Naive thymus-derived CD4-positive, alpha-beta T cell (primary cell): ENCODE measurements at regions of chr12 and their contacts with region 1.

Region 1: DNA sequence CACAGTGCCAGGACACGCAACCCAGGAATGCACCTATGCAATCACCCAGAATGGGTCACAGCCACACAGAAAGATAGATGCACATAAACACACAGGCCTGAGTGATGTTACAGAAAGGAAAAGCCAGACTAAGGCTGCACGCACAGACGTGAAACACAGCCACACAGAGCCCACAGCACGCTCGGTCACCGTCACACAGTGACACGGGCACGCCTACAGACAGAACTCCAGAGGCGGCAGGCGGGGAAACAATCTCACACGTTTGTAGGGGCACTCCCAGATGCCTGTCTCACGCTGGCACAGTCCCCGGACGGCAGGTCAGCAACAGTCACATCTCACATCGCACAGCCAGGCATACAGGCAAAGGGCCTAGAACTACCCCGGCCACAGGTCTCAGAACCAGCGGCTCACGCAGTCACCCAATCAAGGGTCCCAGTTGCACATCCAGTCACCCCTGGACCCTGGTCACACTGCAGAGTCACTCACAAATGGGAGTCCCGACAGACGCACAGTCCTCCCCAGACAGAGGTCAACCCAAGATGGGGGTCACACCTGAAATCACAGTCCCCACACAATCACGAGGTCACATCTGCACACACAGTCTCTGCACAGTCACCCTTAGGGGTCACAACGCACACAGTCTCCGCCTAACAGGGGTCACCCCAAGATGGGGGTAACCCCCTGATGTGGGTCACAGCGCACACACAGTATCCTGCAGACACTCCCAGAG is 790 bp downstream of the SSH1 start:
- DNase-seq: peak; percentile 35 to 77 (median 54)
- ATAC-seq: peak; percentile 68
- H3K4me3 ChIP-seq: peak overlapping the region; percentile 84
- H3K4me3 Mint-ChIP-seq: peak overlapping the region; percentile 89 to 97 (median 94)
- H3K27ac ChIP-seq: peak overlapping the region; percentile 62
- H3K27ac Mint-ChIP-seq: peak overlapping the region; percentile 76 to 99 (median 92)
- H3K4me1 ChIP-seq: peaks cover 18 to 23% of the 10 kb centered on the region in 2 donors
- H3K4me1 Mint-ChIP-seq: peaks cover 26 to 56% (median 47%) of the 10 kb centered on the region in 7 donors
- H3K27me3 ChIP-seq: no peaks in the 10 kb centered on the region
- H3K27me3 Mint-ChIP-seq: peaks cover 0 to 2% (median 0%) of the 10 kb centered on the region in 5 donors

Region 2: GRCh38 chr12:108803428-108804105 is 53.0 kb before region 1 on chr12:
- CTCF ChIA-PET with region 1: no interaction called
- POLR2A ChIA-PET with region 1: no interaction called
- intact Hi-C with region 1: loop called in 1 of 2 experiments (anchors 2 kb)
- DNase-seq: peak; percentile 25 to 78 (median 70)
- ATAC-seq: peak; percentile 93
- H3K4me3 ChIP-seq: no peak overlapping the region
- H3K4me3 Mint-ChIP-seq: no peak overlapping the region
- H3K27ac ChIP-seq: no peak overlapping the region
- H3K27ac Mint-ChIP-seq: peak overlapping the region in 3 of 9 donors; percentile 37 to 62 (median 48)
- H3K4me1 ChIP-seq: peaks cover 0 to 3% of the 10 kb centered on the region in 2 donors
- H3K4me1 Mint-ChIP-seq: peaks cover 0 to 10% (median 3%) of the 10 kb centered on the region in 7 donors
- H3K27me3 ChIP-seq: no peaks in the 10 kb centered on the region
- H3K27me3 Mint-ChIP-seq: no peaks in the 10 kb centered on the region

Region 3: GRCh38 chr12:108884116-108885012 is 27.8 kb after region 1 on chr12:
- CTCF ChIA-PET with region 1: no interaction called
- POLR2A ChIA-PET with region 1: no interaction called
- intact Hi-C with region 1: loop called in 1 of 2 experiments (anchors 1 kb)
- DNase-seq: peak; percentile 15 to 55 (median 33)
- ATAC-seq: peak; percentile 93
- H3K4me3 ChIP-seq: no peak overlapping the region
- H3K4me3 Mint-ChIP-seq: no peak overlapping the region
- H3K27ac ChIP-seq: no peak overlapping the region
- H3K27ac Mint-ChIP-seq: no peak overlapping the region
- H3K4me1 ChIP-seq: no peaks in the 10 kb centered on the region
- H3K4me1 Mint-ChIP-seq: peaks cover 0 to 6% (median 0%) of the 10 kb centered on the region in 7 donors
- H3K27me3 ChIP-seq: no peaks in the 10 kb centered on the region
- H3K27me3 Mint-ChIP-seq: no peaks in the 10 kb centered on the region

Region 4: GRCh38 chr12:109154451-109155438 is 298.2 kb after region 1 on chr12:
- CTCF ChIA-PET with region 1: no interaction called
- POLR2A ChIA-PET with region 1: interaction called, 3 read pairs
- intact Hi-C with region 1: loop called in 1 of 2 experiments (anchors 2 kb)
- DNase-seq: peak; percentile 58 to 87 (median 76)
- ATAC-seq: peak; percentile 99
- H3K4me3 ChIP-seq: peak overlapping the region; percentile 73
- H3K4me3 Mint-ChIP-seq: peak overlapping the region; percentile 85 to 98 (median 95)
- H3K27ac ChIP-seq: peak overlapping the region; percentile 61
- H3K27ac Mint-ChIP-seq: peak overlapping the region; percentile 71 to 95 (median 87)
- H3K4me1 ChIP-seq: peaks cover 5 to 10% of the 10 kb centered on the region in 2 donors
- H3K4me1 Mint-ChIP-seq: peaks cover 13 to 33% (median 19%) of the 10 kb centered on the region in 7 donors
- H3K27me3 ChIP-seq: no peaks in the 10 kb centered on the region
- H3K27me3 Mint-ChIP-seq: peaks cover 0 to 19% (median 0%) of the 10 kb centered on the region in 5 donors

Region 5: GRCh38 chr12:109165599-109165998 is 309.0 kb after region 1 on chr12:
- CTCF ChIA-PET with region 1: no interaction called
- POLR2A ChIA-PET with region 1: no interaction called
- intact Hi-C with region 1: no loop called
- DNase-seq: no peak
- ATAC-seq: no peak
- H3K4me3 ChIP-seq: no peak overlapping the region
- H3K4me3 Mint-ChIP-seq: no peak overlapping the region
- H3K27ac ChIP-seq: no peak overlapping the region
- H3K27ac Mint-ChIP-seq: peak overlapping the region in 1 of 9 donors; percentile 32
- H3K4me1 ChIP-seq: no peaks in the 10 kb centered on the region
- H3K4me1 Mint-ChIP-seq: peaks cover 0 to 9% (median 5%) of the 10 kb centered on the region in 7 donors
- H3K27me3 ChIP-seq: no peaks in the 10 kb centered on the region
- H3K27me3 Mint-ChIP-seq: no peaks in the 10 kb centered on the region